GM10248 (cell line): ENCODE measurements at regions of chr3 and their contacts with region 1.

Region 1: GRCh38 chr3:151918253-151919029 is 45.0 kb downstream of the SUCNR1 start:
- DNase-seq: peak; percentile 55
- CTCF ChIP-seq: peak; percentile 59

Region 2: GRCh38 chr3:151908399-151908798 is 10.0 kb before region 1 on chr3:
- CTCF ChIA-PET with region 1: interaction called, 10 read pairs
- POLR2A ChIA-PET with region 1: no interaction called
- DNase-seq: no peak
- CTCF ChIP-seq: no peak